Posterior vena cava (tissue), 2 donors: ENCODE measurements at regions of chr12 and their contacts with region 1.

Region 1: GRCh38 chr12:6278439-6279255 is 31.8 kb upstream of the PLEKHG6 start:
- DNase-seq: peak; percentile 96

Region 2: GRCh38 chr12:5988659-5989116 is 290.0 kb before region 1 on chr12:
- intact Hi-C with region 1: loop called (anchors 5 to 10 kb)
- DNase-seq: peak; percentile 93

Region 3: DNA sequence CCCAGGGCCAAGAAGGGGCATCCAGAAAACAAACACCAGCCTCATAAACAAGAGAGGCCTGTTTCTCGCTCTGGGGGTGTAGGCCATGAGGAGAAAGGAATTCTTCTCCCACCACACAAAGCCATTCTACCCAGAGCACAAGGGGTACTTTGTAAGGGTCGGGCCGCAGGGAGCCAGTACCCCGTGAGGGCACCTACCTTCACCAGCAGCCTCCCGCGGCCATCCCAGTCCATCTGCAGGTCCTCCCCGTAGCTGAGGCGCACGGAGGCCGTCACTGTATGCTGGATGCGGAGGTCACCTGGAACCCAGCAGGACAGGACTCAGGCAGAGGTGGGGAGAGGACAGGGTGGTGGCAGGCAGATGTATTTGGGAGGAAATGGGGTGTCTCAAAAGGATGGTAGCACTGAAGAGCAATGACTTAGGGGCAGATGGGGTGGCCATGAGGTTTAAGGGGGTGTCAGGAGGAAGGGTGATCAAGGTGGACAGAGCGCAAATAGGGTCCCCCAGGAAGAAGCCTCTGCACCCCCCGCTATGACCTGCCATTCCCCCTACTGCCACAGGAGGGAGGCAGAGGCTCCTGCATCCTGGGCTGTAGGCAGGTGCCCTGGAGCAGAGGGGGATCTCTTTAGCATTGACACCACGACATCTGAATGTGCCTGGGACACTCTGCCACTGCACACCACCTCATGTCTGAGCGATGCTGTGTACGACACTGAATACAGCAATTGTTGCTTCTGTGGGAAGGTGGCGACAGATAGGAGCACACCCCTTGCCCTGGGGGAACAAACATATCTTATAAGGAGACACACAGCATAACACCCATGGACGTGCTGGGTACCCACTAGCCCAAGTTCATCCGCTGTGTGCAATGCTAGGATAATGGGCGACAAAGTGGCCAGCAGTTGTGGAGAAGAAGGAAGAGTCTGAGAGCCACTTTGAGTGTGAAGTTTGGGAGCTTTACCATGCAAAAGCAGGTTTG is 215.6 kb before region 1 on chr12:
- intact Hi-C with region 1: loop called (anchors 2 to 5 kb)
- DNase-seq: no peak

Region 4: GRCh38 chr12:6195665-6196535 is 82.7 kb before region 1 on chr12:
- intact Hi-C with region 1: loop called (anchors 2 to 5 kb)
- DNase-seq: peak; percentile 93

Region 5: GRCh38 chr12:6211421-6211869 is 67.2 kb before region 1 on chr12:
- intact Hi-C with region 1: no loop called
- DNase-seq: no peak

Region 6: DNA sequence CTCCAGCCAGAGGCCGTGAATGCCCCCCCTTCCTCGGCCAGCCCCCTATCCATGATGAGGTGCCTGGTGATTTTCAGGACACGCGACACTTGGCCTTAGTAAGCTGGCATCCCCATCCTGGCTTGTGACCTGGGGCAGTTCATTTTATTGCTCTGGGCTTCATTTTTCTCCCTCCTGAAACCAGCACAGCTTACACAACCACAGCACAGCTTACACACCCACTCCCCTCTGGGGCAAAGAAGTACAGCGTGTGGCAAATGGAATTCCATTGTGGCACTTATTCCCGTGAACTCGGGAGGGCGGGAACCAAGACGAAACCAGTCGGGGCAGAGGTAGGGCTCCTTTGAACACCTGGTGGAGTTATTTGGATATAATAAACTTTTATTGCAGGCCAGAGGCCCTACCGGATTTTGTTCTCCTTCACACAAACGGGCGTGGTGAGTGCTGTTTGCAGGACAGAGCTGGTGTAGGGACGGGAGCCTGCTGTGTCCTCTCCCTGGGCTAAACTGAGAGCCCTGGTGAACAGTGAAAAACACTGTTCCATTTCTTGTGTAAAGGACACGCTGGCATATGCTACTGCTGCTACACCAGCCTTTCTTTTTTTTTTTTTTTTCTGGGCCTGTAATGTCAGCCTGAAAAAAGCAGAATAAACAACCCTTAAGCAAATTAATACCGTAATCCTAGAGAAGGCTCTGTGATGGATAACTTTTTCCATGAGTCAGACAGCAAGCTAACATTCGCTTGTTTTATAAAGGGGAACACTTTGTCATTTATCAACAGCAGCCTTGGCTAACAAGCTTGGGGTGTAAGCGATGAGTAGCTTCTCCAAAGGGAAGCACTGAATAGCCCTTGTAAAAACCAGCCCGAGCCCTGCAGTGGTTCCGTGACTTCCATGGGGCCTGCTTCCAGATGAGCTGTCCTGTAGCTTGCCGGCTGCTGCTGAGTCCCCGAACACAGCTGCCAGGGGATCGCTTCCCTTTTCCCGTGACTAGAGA is 49.1 kb before region 1 on chr12:
- intact Hi-C with region 1: loop called (anchors 2 to 5 kb)
- DNase-seq: peak; percentile 94

Region 7: GRCh38 chr12:6312529-6313325 is 34.1 kb after region 1 on chr12:
- intact Hi-C with region 1: no loop called
- DNase-seq: no peak